ENCODE measurements at regions of chr1 and their contacts with region 1.

Region 1: GRCh38 chr1:245380790-245381535 is 226.2 kb downstream of the KIF26B start:
- ATAC-seq: peak in 2 of 8 experiments; percentile 3 to 9
- H3K4me3 ChIP-seq: no peak overlapping the region
- H3K27ac ChIP-seq: peak overlapping the region in 1 of 2 donors; percentile 3
- H3K4me1 ChIP-seq: peaks cover 13 to 14% of the 10 kb centered on the region in 2 donors

Region 2: GRCh38 chr1:245156081-245156735 is 224.8 kb before region 1 on chr1:
- in situ Hi-C with region 1: loop called in 2 of 9 experiments (anchors 25 kb)
- ATAC-seq: peak; percentile 65 to 88 (median 70)
- H3K4me3 ChIP-seq: peak overlapping the region; percentile 60 to 75 (median 68)
- H3K27ac ChIP-seq: peak overlapping the region; percentile 42 to 69
- H3K4me1 ChIP-seq: peaks cover 0 to 5% of the 10 kb centered on the region in 2 donors